Activated naive CD4-positive, alpha-beta T cell treated with anti-CD3 and anti-CD28 coated beads for 36 hours (primary cell): ENCODE measurements at regions of chr12 and their contacts with region 1.

Region 1: GRCh38 chr12:94326727-94327126 is 132.9 kb downstream of the CEP83 start:
- DNase-seq: no peak
- H3K4me3 Mint-ChIP-seq: no peak overlapping the region
- H3K27ac Mint-ChIP-seq: no peak overlapping the region
- H3K4me1 Mint-ChIP-seq: peaks cover 9% of the 10 kb centered on the region
- H3K27me3 Mint-ChIP-seq: no peaks in the 10 kb centered on the region

Region 2: GRCh38 chr12:94305130-94305957 is 21.4 kb before region 1 on chr12:
- CTCF ChIA-PET with region 1: no interaction called
- intact Hi-C with region 1: loop called (anchors 2 kb)
- DNase-seq: peak; percentile 58
- H3K4me3 Mint-ChIP-seq: no peak overlapping the region
- H3K27ac Mint-ChIP-seq: no peak overlapping the region
- H3K4me1 Mint-ChIP-seq: peaks cover 18% of the 10 kb centered on the region
- H3K27me3 Mint-ChIP-seq: no peaks in the 10 kb centered on the region

Region 3: DNA sequence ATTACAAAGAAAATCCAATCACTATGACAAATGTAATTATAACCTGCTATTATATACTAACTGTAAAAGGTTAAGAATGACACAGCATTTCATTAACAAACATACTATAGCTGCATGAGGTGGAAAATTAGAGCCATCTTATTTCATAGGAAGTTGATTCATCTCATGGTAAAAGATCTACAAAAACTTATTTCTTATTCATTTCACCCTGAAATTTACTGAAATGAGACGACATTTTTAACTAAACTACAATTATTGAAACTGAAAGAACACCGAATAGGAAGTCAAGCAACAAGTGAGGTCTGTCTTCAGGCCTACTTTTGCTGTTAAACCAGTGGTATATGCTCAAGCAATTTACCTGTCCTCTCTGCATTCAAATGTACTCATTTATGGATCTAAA is 45.7 kb after region 1 on chr12:
- CTCF ChIA-PET with region 1: no interaction called
- intact Hi-C with region 1: loop called (anchors 2 kb)
- DNase-seq: peak; percentile 7
- H3K4me3 Mint-ChIP-seq: no peak overlapping the region
- H3K27ac Mint-ChIP-seq: peak overlapping the region; percentile 66
- H3K4me1 Mint-ChIP-seq: peaks cover 23% of the 10 kb centered on the region
- H3K27me3 Mint-ChIP-seq: no peaks in the 10 kb centered on the region

Region 4: GRCh38 chr12:94386422-94386821 is 59.7 kb after region 1 on chr12:
- CTCF ChIA-PET with region 1: no interaction called
- intact Hi-C with region 1: no loop called
- DNase-seq: no peak
- H3K4me3 Mint-ChIP-seq: no peak overlapping the region
- H3K27ac Mint-ChIP-seq: no peak overlapping the region
- H3K4me1 Mint-ChIP-seq: peaks cover 9% of the 10 kb centered on the region
- H3K27me3 Mint-ChIP-seq: no peaks in the 10 kb centered on the region

Region 5: DNA sequence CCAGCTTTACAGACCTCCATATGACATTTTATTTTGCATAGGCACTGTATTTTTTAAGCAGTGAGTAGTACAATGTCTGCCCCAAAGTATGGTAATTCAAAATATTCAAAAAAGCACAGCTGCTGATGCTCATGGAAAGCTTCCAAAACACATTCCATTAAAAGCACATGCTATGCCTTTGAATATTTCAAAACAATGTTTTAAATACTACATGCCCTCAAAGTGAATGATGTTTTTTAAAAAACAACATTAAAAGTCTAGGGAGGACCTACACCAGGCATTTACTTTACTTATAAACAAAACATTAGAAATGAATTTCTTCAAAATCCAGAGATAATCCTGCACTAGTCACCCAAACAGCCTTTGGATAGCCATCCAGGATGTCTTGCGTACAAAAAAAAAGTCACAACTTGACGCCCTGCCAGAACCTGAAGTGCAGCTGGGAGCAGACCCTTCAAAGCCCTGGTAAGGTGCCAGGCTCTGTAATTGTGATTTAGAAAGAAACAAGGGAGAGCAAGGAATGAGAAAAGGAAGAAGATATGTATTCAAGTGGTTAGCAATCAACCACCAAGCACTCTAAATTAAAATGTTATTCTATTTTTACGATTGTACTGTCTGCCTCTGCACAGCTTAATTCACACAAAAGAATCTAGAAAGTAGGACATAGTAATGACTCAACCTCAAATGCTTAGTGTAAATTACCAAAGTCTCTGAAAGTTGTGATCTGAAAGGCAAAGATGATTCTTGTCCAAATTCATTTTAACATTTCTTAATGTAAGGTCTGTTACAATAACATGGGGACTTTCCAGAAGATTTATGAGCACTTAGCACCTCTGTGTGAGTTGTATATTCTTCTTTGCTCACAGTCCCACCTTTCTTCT is 101.0 kb after region 1 on chr12:
- CTCF ChIA-PET with region 1: interaction called, 3 read pairs
- intact Hi-C with region 1: loop called (anchors 2 kb)
- DNase-seq: peak; percentile 45
- H3K4me3 Mint-ChIP-seq: peak overlapping the region; percentile 28
- H3K27ac Mint-ChIP-seq: peak overlapping the region; percentile 63
- H3K4me1 Mint-ChIP-seq: peaks cover 34% of the 10 kb centered on the region
- H3K27me3 Mint-ChIP-seq: no peaks in the 10 kb centered on the region

Region 6: GRCh38 chr12:94532490-94533422 is 206.0 kb after region 1 on chr12:
- CTCF ChIA-PET with region 1: no interaction called
- intact Hi-C with region 1: loop called (anchors 1 kb)
- DNase-seq: peak; percentile 83
- H3K4me3 Mint-ChIP-seq: no peak overlapping the region
- H3K27ac Mint-ChIP-seq: no peak overlapping the region
- H3K4me1 Mint-ChIP-seq: no peaks in the 10 kb centered on the region
- H3K27me3 Mint-ChIP-seq: no peaks in the 10 kb centered on the region